ENCODE measurements at regions of chr2 and their contacts with region 1.

Region 1: DNA sequence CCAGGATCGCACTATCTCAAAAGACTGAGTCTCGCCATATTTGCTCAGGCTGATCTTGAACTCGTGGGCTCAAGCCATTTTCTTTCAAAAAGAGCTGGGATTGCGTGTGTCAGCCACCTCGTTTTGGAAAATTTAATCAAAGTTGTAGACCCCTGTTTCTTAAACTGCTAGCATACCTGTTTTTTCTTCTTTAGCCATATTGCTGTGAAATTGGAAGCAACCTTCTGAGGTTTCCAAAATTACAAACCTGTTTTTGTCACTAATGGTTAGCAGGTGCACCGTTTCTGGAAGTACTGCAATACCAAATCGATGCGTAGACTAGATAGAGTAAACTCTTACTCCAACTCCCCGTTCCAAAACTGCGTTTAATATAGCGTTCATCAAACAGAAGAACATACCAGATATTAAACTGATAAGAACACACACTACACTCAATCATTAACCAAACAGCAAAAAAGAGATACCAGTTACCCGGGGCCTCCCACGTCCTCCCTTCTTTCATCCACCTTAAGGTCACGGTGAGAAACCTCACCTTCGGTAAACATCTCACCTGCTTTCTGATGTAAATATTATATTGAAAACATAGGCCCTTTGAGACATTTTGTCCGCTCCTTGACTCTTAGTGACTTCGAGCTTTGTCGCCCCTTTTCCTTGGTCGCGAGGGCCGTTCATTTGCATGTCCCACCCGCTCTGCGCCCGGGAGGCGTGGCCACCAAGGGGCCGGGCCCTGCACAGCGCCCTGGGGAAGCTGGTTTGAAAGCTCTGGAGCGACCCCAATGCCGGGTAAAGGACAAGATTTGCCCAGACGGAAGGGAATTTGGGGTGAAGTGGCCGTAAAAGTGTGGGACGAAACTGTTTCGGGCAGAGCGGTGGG is at the start of gene RNU2-63P:
- DNase-seq: peak; percentile 81
- ATAC-seq: peak; percentile 83
- H3K4me3 Mint-ChIP-seq: peak within 1 kb of the TSS; percentile 98
- H3K27ac Mint-ChIP-seq: peak within 1 kb of the TSS; percentile 99
- H3K4me1 Mint-ChIP-seq: peaks cover 28% of the 10 kb centered on the region
- H3K27me3 Mint-ChIP-seq: no peaks in the 10 kb centered on the region
- total RNA-seq, gene RNU2-63P: 4.5 to 7.0 TPM

Region 2: DNA sequence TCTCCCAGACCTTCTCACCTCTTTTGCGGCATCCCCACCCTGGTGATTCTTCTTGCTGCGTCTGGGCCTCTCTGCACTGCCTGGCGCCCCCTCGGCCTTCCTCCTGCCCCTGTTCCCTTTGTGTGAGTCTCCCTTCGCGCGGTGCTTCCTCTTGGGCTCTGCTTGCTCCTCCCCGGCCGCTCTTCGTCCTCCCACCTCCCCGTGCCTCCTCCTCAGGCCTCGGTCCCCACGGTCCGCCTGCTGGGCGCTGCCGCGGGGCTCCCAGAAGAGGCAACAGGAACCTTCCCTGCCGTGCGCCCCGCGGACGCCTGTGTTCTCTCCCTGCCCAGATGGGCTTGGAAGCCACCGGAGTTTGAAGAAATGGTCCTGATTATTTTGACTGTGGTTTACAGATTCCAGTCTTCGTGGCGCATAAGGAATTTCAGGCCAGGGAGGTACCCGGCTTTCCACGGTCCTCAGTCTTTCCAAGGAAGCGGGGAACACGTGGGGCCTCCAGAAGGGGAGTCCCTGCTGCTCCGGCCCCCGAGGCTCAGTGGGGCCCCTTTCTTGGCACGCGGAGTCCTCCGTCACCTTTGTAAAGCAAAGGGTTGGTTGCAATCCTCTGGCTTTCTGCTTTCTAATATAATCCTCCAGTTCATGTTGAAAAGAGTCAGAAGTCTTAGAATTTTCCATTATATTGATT is 13.1 kb before region 1 on chr2:
- CTCF ChIA-PET with region 1: interaction called, 8 read pairs
- POLR2A ChIA-PET with region 1: interaction called, 20 read pairs
- DNase-seq: no peak
- ATAC-seq: no peak
- H3K4me3 Mint-ChIP-seq: no peak overlapping the region
- H3K27ac Mint-ChIP-seq: no peak overlapping the region
- H3K4me1 Mint-ChIP-seq: peaks cover 5% of the 10 kb centered on the region
- H3K27me3 Mint-ChIP-seq: peaks cover 3% of the 10 kb centered on the region

Region 3: GRCh38 chr2:88027697-88028389 is 11.5 kb after region 1 on chr2:
- CTCF ChIA-PET with region 1: no interaction called
- POLR2A ChIA-PET with region 1: interaction called, 22 read pairs
- DNase-seq: no peak
- ATAC-seq: peak; percentile 53
- H3K4me3 Mint-ChIP-seq: no peak overlapping the region
- H3K27ac Mint-ChIP-seq: peak overlapping the region; percentile 45
- H3K4me1 Mint-ChIP-seq: peaks cover 9% of the 10 kb centered on the region
- H3K27me3 Mint-ChIP-seq: no peaks in the 10 kb centered on the region

Region 4: GRCh38 chr2:88177556-88177955 is 161.2 kb after region 1 on chr2:
- CTCF ChIA-PET with region 1: no interaction called
- POLR2A ChIA-PET with region 1: no interaction called
- DNase-seq: no peak
- ATAC-seq: no peak
- H3K4me3 Mint-ChIP-seq: no peak overlapping the region
- H3K27ac Mint-ChIP-seq: no peak overlapping the region
- H3K4me1 Mint-ChIP-seq: peaks cover 12% of the 10 kb centered on the region
- H3K27me3 Mint-ChIP-seq: peaks cover 8% of the 10 kb centered on the region

Region 5: DNA sequence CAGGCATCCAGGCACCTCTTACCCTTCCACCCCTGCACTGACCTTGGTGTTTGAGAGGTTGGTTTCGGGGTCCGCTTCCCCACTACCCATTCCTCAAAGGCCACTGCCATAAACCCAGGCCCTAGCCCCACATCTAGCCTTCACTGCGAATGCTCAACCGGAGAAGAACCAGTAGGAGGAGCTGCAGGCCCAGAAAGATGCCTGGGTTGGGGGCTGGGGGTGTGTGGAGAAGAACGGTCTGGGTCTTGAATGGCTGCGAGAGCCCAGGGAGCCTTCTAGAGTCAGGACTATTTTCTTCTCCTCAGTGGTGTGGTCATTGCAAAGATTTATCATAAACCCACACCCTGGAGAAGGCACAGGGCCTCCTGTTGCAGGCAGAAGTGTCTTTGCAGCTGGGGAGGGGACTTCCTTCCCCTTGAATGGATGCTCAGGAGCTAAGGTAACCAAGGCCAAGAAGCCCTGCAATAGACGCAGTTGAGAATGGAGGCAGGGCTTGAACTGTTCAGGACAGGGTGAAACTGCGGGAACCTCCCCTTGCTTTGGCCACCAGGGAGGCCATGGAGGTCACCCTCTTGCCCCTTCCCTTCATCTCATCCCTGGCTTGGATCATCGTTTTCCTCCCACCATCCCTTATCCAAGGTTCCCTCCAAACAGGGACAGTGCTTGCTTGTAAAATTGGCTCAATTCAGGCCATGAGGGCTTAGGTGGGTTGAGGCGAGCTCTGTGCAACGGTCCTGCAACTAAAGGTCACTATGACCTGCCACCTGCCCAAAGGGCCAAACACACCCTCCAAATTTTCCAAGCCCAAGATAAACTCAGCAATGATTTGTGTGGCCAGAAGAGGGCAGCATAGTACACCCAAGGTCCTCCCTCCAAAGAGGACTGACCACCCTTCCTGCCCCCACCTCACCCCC is 174.7 kb after region 1 on chr2:
- CTCF ChIA-PET with region 1: no interaction called
- POLR2A ChIA-PET with region 1: no interaction called
- DNase-seq: peak; percentile 30
- ATAC-seq: no peak
- H3K4me3 Mint-ChIP-seq: no peak overlapping the region
- H3K27ac Mint-ChIP-seq: no peak overlapping the region
- H3K4me1 Mint-ChIP-seq: no peaks in the 10 kb centered on the region
- H3K27me3 Mint-ChIP-seq: peaks cover 3% of the 10 kb centered on the region

Measured in activated CD8-positive, alpha-beta T cell treated with anti-CD3 and anti-CD28 coated beads, Interleukin-2, amount 10 ng/mL, durations not matched to agents 7 days and 5 days (primary cell).